B cell (primary cell): ENCODE measurements at regions of chr9 and their contacts with region 1.

Region 1: GRCh38 chr9:7976167-7976755 is 176.7 kb upstream of the DMAC1 start:
- DNase-seq: peak; percentile 87
- ATAC-seq: peak; percentile 92
- H3K4me3 ChIP-seq: peak overlapping the region in 2 of 5 experiments; percentile 1 to 29
- H3K4me3 Mint-ChIP-seq: peak overlapping the region; percentile 74
- H3K27ac ChIP-seq: peak overlapping the region; percentile 81
- H3K27ac Mint-ChIP-seq: peak overlapping the region; percentile 91
- H3K4me1 ChIP-seq: peaks cover 57 to 65% of the 10 kb centered on the region in 2 donors
- H3K4me1 Mint-ChIP-seq: peaks cover 72% of the 10 kb centered on the region
- H3K27me3 ChIP-seq: no peaks in the 10 kb centered on the region
- H3K27me3 Mint-ChIP-seq: no peaks in the 10 kb centered on the region
- CTCF ChIP-seq: no peak

Region 2: DNA sequence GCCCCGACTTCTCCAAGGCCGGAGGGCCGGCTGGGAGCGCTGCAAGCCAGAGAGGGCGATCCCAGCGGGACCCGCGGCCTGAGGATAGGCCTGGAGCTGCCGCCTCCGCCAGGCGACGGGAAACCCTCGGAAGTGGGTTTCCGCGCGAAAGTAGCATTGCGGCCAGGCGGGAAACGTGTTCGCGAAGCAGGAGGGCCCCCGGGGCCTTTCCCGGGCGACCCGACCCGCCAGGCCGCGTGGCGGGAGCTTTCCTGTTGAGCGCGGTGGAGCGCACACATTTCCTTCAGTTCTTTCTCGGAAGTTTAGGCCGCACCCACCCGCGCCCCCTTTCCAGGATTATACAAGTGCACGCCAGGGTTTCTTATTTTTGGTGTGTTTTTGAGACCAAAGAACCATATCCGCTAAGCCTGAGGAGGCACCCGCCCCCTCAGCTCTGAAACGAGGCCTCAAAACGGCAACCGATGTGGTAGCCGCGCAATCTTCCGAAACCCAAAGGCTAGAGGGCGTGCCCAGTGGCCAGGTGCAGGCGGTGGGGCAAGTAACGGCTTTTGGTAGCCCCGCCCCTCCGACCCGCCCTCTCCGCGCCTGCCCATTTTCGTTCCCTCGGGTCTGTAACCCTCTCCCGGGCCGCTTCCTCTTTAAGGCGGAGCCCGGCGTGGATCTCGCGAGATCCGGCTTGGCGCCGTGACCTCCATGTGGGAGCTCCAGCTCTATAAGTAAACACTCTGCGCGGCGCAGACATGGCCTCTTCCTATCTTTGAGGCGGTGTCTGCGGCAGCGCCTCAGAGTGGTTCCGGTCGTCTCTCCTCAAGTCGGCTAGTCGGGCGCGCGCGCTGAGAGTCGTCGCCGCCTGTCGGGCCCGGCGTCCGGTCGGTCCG is 1563.5 kb before region 1 on chr9 and contains the start of gene UHRF2:
- CTCF ChIA-PET with region 1: no interaction called
- POLR2A ChIA-PET with region 1: no interaction called
- intact Hi-C with region 1: loop called (anchors 10 kb)
- DNase-seq: peak; percentile 100
- ATAC-seq: peak; percentile 87
- H3K4me3 ChIP-seq: peak within 1 kb of the TSS; percentile 72 to 89 (median 87)
- H3K4me3 Mint-ChIP-seq: peak within 1 kb of the TSS; percentile 88
- H3K27ac ChIP-seq: peak within 1 kb of the TSS; percentile 95 to 97
- H3K27ac Mint-ChIP-seq: peak within 1 kb of the TSS; percentile 98
- H3K4me1 ChIP-seq: peaks cover 61 to 62% of the 10 kb centered on the region in 2 donors
- H3K4me1 Mint-ChIP-seq: peaks cover 58% of the 10 kb centered on the region
- H3K27me3 ChIP-seq: no peaks in the 10 kb centered on the region
- H3K27me3 Mint-ChIP-seq: no peaks in the 10 kb centered on the region
- CTCF ChIP-seq: no peak
- total RNA-seq, gene UHRF2: 153 and 171 TPM in 2 replicates

Region 3: DNA sequence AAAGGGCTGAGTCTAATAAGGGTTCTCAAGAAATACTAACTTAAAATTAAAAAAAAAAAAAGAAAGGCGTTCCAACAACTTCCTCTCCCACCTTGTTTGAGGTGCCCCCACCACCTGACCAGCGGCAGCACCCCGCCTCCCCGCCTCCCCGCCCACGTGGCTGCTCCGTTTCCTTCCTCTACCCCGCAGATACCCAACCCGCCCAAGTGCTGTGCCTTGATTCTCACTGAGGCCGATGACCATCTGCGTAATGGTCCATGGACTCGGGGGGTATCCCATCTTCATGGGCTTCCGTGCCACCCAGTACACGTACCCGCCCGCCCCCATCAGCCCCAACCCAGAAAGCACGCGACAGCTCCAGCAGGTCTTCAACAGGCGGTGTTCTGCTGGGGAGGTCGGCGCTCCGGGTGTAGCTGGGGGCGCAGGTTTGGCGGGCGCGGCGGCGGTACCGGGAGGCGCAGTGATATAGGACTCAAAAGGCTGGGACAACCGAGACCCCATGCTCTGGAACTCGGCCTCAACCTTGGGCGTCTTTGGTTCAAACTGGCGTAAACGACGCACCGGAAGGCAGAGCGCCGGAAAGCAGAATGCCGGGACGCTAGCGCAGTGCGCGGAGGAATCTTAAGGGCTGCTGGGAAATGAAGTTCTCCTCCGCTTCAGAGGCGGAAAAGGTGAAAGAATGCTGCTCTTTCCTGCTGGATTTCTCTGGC is 176.9 kb before region 1 on chr9 and contains the start of gene DMAC1:
- CTCF ChIA-PET with region 1: no interaction called
- POLR2A ChIA-PET with region 1: no interaction called
- intact Hi-C with region 1: loop called (anchors 2 kb)
- DNase-seq: peak; percentile 84
- ATAC-seq: peak; percentile 90
- H3K4me3 ChIP-seq: peak within 1 kb of the TSS; percentile 53 to 92 (median 90)
- H3K4me3 Mint-ChIP-seq: peak within 1 kb of the TSS; percentile 98
- H3K27ac ChIP-seq: peak within 1 kb of the TSS; percentile 87 to 90
- H3K27ac Mint-ChIP-seq: peak within 1 kb of the TSS; percentile 95
- H3K4me1 ChIP-seq: peaks cover 10 to 12% of the 10 kb centered on the region in 2 donors
- H3K4me1 Mint-ChIP-seq: peaks cover 22% of the 10 kb centered on the region
- H3K27me3 ChIP-seq: no peaks in the 10 kb centered on the region
- H3K27me3 Mint-ChIP-seq: no peaks in the 10 kb centered on the region
- CTCF ChIP-seq: no peak
- total RNA-seq, gene DMAC1: 25.7 and 31.7 TPM in 2 replicates

Region 4: GRCh38 chr9:7869340-7869739 is 106.9 kb before region 1 on chr9:
- CTCF ChIA-PET with region 1: no interaction called
- POLR2A ChIA-PET with region 1: no interaction called
- intact Hi-C with region 1: loop called (anchors 2 kb)
- DNase-seq: no peak
- ATAC-seq: no peak
- H3K4me3 ChIP-seq: no peak overlapping the region
- H3K4me3 Mint-ChIP-seq: no peak overlapping the region
- H3K27ac ChIP-seq: no peak overlapping the region
- H3K27ac Mint-ChIP-seq: no peak overlapping the region
- H3K4me1 ChIP-seq: no peaks in the 10 kb centered on the region
- H3K4me1 Mint-ChIP-seq: no peaks in the 10 kb centered on the region
- H3K27me3 ChIP-seq: no peaks in the 10 kb centered on the region
- H3K27me3 Mint-ChIP-seq: no peaks in the 10 kb centered on the region
- CTCF ChIP-seq: no peak

Region 5: GRCh38 chr9:7935681-7936080 is 40.6 kb before region 1 on chr9:
- CTCF ChIA-PET with region 1: no interaction called
- POLR2A ChIA-PET with region 1: no interaction called
- intact Hi-C with region 1: loop called (anchors 5 kb)
- DNase-seq: peak; percentile 61
- ATAC-seq: peak; percentile 89
- H3K4me3 ChIP-seq: peak overlapping the region in 3 of 5 experiments; percentile 1 to 22 (median 8)
- H3K4me3 Mint-ChIP-seq: peak overlapping the region; percentile 81
- H3K27ac ChIP-seq: peak overlapping the region; percentile 70 to 74
- H3K27ac Mint-ChIP-seq: peak overlapping the region; percentile 88
- H3K4me1 ChIP-seq: peaks cover 21 to 25% of the 10 kb centered on the region in 2 donors
- H3K4me1 Mint-ChIP-seq: peaks cover 18% of the 10 kb centered on the region
- H3K27me3 ChIP-seq: no peaks in the 10 kb centered on the region
- H3K27me3 Mint-ChIP-seq: no peaks in the 10 kb centered on the region
- CTCF ChIP-seq: no peak